Head of caudate nucleus (tissue), 42 donors: ENCODE measurements at regions of chr20 and their contacts with region 1.

Region 1: GRCh38 chr20:9407805-9408421 is 106.5 kb upstream of the LAMP5 start:
- DNase-seq: peak in 39 of 42 donors; percentile 21 to 93 (median 79)

Region 2: DNA sequence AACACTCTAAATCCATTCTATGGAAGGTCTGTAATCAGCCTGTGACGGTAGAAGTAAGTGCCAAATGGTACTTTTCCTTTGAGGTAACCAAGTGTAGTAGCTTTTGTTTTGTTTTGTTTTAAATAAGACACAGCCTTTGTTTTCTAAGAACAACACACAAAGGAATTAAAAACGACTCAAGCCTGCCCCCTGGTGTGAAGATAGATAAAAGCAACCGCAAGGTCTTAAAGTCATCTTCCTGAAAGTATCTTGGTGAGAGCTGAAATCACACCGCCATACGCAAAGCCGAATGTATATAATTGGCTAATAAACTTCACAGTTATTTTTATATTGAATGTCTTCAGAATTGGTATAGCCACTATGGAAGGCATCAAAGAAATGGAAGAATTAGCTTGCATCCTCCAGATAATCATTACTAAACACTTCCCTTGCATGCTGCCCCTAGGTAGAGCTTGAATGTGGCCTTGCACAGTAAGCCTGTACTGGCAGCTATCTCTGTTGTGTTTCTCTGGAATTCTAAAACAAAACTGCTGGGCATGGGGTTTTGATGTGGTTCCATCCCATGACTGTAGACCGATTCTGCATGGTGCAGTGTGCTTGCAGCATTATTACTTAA is 202.1 kb after region 1 on chr20:
- intact Hi-C with region 1: loop called (anchors 2 kb)
- DNase-seq: peak in 39 of 42 donors; percentile 16 to 92 (median 74)